ENCODE measurements at regions of chr5 and their contacts with region 1.

Region 1: GRCh38 chr5:172860520-172861443 is 26.7 kb downstream of the ERGIC1 start:
- DNase-seq: no peak
- ATAC-seq: no peak
- H3K4me3 ChIP-seq: peak overlapping the region in 1 of 3 experiments; percentile 6; a peak in 1 of 6 replicates
- H3K27ac ChIP-seq: peak overlapping the region; percentile 99
- H3K4me1 ChIP-seq: peaks cover 87% of the 10 kb centered on the region
- H3K27me3 ChIP-seq: no peaks in the 10 kb centered on the region
- CTCF ChIP-seq: no peak
- EP300 ChIP-seq: no peak
- POLR2A ChIP-seq: no peak
- RAD21 ChIP-seq: no peak

Region 2: GRCh38 chr5:172086194-172087019 is 774.4 kb before region 1 on chr5:
- CTCF ChIA-PET with region 1: no interaction called
- POLR2A ChIA-PET with region 1: no interaction called
- in situ Hi-C with region 1: no loop called
- intact Hi-C with region 1: no loop called
- DNase-seq: no peak
- ATAC-seq: peak; percentile 78
- H3K4me3 ChIP-seq: peak overlapping the region in 1 of 3 experiments; percentile 57; a peak in 3 of 6 replicates
- H3K27ac ChIP-seq: no peak overlapping the region
- H3K4me1 ChIP-seq: peaks cover 14% of the 10 kb centered on the region
- H3K27me3 ChIP-seq: no peaks in the 10 kb centered on the region
- CTCF ChIP-seq: no peak
- EP300 ChIP-seq: no peak
- POLR2A ChIP-seq: no peak
- RAD21 ChIP-seq: no peak

Region 3: GRCh38 chr5:172714491-172715421 is 146.0 kb before region 1 on chr5:
- CTCF ChIA-PET with region 1: interaction called, 4 read pairs
- POLR2A ChIA-PET with region 1: interaction called, 16 read pairs
- in situ Hi-C with region 1: no loop called
- intact Hi-C with region 1: no loop called
- DNase-seq: peak; percentile 91
- ATAC-seq: peak; percentile 83
- H3K4me3 ChIP-seq: peak overlapping the region in 2 of 3 experiments; percentile 15 to 49; a peak in 4 of 6 replicates
- H3K27ac ChIP-seq: peak overlapping the region; percentile 66
- H3K4me1 ChIP-seq: peaks cover 51% of the 10 kb centered on the region
- H3K27me3 ChIP-seq: no peaks in the 10 kb centered on the region
- CTCF ChIP-seq: peak; percentile 84
- EP300 ChIP-seq: peak in 1 of 2 experiments; percentile 69; a peak in 1 of 4 replicates
- POLR2A ChIP-seq: peak in 1 of 2 experiments; percentile 67; a peak in 2 of 4 replicates
- RAD21 ChIP-seq: peak; percentile 61

Region 4: DNA sequence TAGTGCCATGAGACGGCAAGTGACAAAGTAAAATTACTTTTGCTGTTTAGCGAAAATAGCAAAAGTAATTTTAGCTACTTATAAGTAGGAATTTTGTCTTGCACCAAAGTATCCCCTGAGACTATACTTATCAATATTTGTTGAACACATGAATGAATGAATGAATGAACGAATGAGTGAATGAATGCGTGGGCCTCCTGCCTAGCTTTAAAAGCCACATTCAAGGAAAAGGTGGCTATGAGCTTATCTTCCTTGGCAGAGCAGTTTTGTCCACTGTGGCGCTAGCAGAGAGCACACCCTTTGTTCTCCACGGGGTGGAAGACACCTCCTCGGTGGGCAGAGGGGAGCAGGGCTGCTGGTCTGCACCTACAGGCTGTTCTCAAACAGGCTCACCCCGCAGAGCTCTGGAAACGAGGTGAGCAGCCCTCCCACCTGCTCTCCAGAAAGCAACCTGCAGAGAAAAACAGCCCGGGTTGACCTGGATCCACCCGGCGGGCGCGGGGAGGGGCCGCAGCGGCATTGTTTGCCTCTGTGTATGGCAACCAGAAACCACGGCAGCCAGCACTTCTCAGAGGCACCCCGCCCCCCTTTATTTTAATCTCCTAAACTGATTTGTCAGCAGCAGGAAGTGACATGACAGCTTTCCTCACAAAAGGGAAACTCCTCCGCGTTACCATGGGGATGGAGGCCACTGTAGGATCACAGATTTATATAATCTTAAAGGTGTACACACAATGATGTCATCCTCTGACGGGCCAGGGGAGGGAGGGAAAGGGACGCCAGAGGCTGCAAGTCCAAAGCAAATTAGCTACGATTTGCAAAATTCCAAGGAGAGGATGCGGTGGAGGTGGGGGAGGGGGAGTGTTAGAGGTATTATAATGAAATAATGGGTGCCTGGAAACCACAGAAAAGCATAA is 95.7 kb before region 1 on chr5:
- CTCF ChIA-PET with region 1: no interaction called
- POLR2A ChIA-PET with region 1: interaction called, 351 read pairs
- in situ Hi-C with region 1: loop called (anchors 10 kb)
- intact Hi-C with region 1: loop called (anchors 1 kb)
- DNase-seq: peak; percentile 99
- ATAC-seq: peak; percentile 78
- H3K4me3 ChIP-seq: peak overlapping the region; percentile 54 to 73 (median 54); a peak in 5 of 6 replicates
- H3K27ac ChIP-seq: peak overlapping the region; percentile 84
- H3K4me1 ChIP-seq: peaks cover 55% of the 10 kb centered on the region
- H3K27me3 ChIP-seq: no peaks in the 10 kb centered on the region; a peak in 2 of 5 replicates
- CTCF ChIP-seq: peak; percentile 22; the same call in 1 of the 2 replicates
- EP300 ChIP-seq: peak; percentile 61 to 73; a peak in 2 of 4 replicates
- POLR2A ChIP-seq: peak in 1 of 2 experiments; percentile 64; a peak in 1 of 4 replicates
- RAD21 ChIP-seq: peak; percentile 45

Region 5: DNA sequence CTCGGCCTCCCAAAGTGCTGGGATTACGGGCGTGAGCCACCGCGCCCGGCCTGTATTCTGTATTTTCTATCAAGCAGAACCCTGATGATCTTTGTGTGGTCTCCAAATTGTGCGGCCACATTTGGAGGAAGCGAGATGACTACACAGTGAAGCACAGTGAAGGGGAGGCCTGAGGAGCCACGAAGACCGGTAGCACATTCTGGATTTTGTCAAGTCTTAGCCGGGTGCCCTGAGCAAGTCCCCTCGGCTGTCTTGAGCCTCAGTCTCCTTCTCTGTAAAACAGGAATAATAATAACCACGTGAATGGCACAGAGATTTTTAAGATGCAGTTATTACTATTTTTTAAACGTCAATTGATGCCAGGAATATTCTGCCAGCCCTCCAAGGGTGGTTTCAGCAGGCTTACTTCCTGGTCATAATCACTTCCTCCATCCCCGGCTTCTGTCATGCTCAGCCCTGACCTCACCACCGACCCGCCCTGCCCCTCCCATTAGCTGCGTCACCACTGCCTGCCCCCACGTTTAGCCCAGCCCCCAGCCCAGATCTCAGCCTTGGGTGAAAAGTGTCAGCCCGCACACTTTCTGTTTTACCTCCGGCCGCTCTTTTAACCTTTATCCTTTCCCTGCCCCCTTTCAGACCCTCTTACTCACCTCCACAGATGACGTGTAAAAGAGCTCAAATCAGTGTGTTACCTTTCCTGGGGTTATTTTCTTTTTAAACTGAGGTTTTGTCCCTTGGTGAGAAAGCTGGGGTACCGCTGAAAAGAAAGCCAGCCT is 53.7 kb before region 1 on chr5:
- CTCF ChIA-PET with region 1: no interaction called
- POLR2A ChIA-PET with region 1: interaction called, 29 read pairs
- in situ Hi-C with region 1: no loop called
- intact Hi-C with region 1: no loop called
- DNase-seq: peak; percentile 80
- ATAC-seq: peak; percentile 95
- H3K4me3 ChIP-seq: peak overlapping the region; percentile 47 to 56 (median 50)
- H3K27ac ChIP-seq: peak overlapping the region; percentile 67
- H3K4me1 ChIP-seq: peaks cover 43% of the 10 kb centered on the region
- H3K27me3 ChIP-seq: no peaks in the 10 kb centered on the region
- CTCF ChIP-seq: no peak
- EP300 ChIP-seq: peak in 1 of 2 experiments; percentile 44; a peak in 1 of 4 replicates
- POLR2A ChIP-seq: peak; percentile 20 to 54; a peak in 2 of 4 replicates
- RAD21 ChIP-seq: no peak

Region 6: GRCh38 chr5:172849606-172850453 is 11.0 kb before region 1 on chr5:
- CTCF ChIA-PET with region 1: no interaction called
- POLR2A ChIA-PET with region 1: interaction called, 12 read pairs
- in situ Hi-C with region 1: no loop called
- intact Hi-C with region 1: no loop called
- DNase-seq: no peak
- ATAC-seq: no peak
- H3K4me3 ChIP-seq: no peak overlapping the region
- H3K27ac ChIP-seq: no peak overlapping the region
- H3K4me1 ChIP-seq: peaks cover 92% of the 10 kb centered on the region
- H3K27me3 ChIP-seq: no peaks in the 10 kb centered on the region
- CTCF ChIP-seq: no peak
- EP300 ChIP-seq: no peak
- POLR2A ChIP-seq: no peak
- RAD21 ChIP-seq: no peak

Region 7: DNA sequence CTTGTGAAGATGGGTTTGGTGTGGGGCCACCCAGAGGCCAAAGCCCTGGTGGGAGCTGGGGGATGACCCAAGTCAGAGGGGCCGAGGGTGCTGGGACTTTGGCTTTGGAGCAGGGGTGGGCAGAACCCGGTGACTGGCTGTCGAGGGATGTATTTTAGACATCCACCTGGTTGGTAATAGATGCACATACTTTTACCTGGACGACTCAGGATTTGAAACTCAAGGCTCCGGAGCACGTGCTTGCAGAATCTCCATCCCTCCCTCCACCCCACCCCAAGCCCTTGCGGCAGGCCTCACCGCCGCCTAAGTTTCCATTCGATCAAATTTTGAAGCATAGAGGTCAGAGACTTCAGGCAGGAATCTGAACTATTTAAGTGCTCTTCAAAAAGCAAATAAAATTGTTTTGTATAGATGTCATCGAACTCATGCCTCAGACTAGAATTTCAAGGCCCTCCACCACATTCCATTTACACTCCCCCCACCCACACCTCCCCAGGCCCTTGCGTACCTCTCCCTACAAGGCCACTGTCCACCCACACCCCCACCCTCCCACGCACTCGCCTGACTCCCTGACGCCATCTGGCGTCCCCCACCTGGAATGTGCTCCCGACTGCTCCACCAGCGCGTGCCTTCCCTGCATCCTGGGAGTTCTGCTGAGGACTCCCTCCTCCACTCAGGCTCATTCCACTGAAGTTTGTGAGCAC is 41.9 kb after region 1 on chr5:
- CTCF ChIA-PET with region 1: interaction called, 3 read pairs
- POLR2A ChIA-PET with region 1: interaction called, 18 read pairs
- in situ Hi-C with region 1: no loop called
- intact Hi-C with region 1: loop called (anchors 2 kb)
- DNase-seq: peak; percentile 90
- ATAC-seq: peak; percentile 84
- H3K4me3 ChIP-seq: no peak overlapping the region; a peak in 1 of 6 replicates
- H3K27ac ChIP-seq: peak overlapping the region; percentile 70
- H3K4me1 ChIP-seq: peaks cover 44% of the 10 kb centered on the region
- H3K27me3 ChIP-seq: no peaks in the 10 kb centered on the region
- CTCF ChIP-seq: peak; percentile 97
- EP300 ChIP-seq: peak in 1 of 2 experiments; percentile 78; a peak in 2 of 4 replicates
- POLR2A ChIP-seq: no peak
- RAD21 ChIP-seq: peak; percentile 80